Heart right ventricle (tissue), 16 donors: ENCODE measurements at regions of chr7 and their contacts with region 1.

Region 1: GRCh38 chr7:36979810-36980248 is 255.5 kb upstream of the AOAH start:
- DNase-seq: no peak
- ATAC-seq: peak in 2 of 8 donors; percentile 42 to 64
- H3K4me3 ChIP-seq: no peak overlapping the region
- H3K27ac ChIP-seq: no peak overlapping the region
- H3K4me1 ChIP-seq: peaks cover 0 to 12% (median 8%) of the 10 kb centered on the region in 9 donors
- H3K27me3 ChIP-seq: no peaks in the 10 kb centered on the region
- CTCF ChIP-seq: no peak

Region 2: GRCh38 chr7:36894190-36894589 is 85.6 kb before region 1 on chr7:
- intact Hi-C with region 1: no loop called
- DNase-seq: no peak
- ATAC-seq: no peak
- H3K4me3 ChIP-seq: no peak overlapping the region
- H3K27ac ChIP-seq: no peak overlapping the region
- H3K4me1 ChIP-seq: peaks cover 0 to 13% (median 0%) of the 10 kb centered on the region in 9 donors
- H3K27me3 ChIP-seq: no peaks in the 10 kb centered on the region
- CTCF ChIP-seq: no peak

Region 3: GRCh38 chr7:37176079-37176478 is 196.2 kb after region 1 on chr7:
- intact Hi-C with region 1: loop called in 8 of 10 experiments (anchors 5 kb)
- DNase-seq: no peak
- ATAC-seq: no peak
- H3K4me3 ChIP-seq: no peak overlapping the region
- H3K27ac ChIP-seq: no peak overlapping the region
- H3K4me1 ChIP-seq: no peaks in the 10 kb centered on the region
- H3K27me3 ChIP-seq: no peaks in the 10 kb centered on the region
- CTCF ChIP-seq: no peak

Region 4: DNA sequence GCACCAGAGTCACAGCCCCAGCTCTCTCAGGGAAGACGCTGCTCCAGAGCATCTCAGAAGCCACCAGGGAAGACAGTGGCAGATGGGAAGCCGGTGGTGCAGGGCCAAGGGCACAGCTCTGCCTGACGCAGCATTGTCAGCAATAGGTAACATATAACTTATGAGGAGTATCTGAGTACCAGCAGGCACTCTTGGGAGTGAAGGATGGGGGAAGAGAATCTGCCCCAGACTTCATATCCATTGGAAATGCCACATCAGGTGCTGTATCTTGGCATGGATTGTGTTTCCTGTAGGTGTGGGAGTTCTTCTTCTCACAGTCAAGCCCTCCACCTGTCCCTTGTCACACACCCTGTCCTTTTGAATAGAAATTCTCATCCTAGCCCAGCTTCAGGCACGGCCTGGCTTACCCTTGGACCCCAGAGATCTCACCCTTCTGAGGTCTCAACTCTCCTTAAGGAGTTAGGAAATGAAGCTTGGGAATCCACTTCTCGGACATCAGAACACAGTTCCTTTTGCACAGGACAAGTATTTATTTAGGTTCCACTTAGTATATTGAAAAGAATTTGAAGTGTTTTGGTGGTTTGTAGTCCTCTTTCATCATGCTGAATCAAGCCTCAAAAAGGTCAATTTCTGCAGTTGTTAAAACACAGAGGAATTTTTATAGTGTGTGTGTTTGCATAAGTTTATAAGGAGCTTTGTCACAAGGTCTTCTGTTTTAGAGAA is 950.6 kb after region 1 on chr7:
- intact Hi-C with region 1: no loop called
- DNase-seq: no peak
- ATAC-seq: no peak
- H3K4me3 ChIP-seq: no peak overlapping the region
- H3K27ac ChIP-seq: no peak overlapping the region
- H3K4me1 ChIP-seq: peaks cover 0 to 12% (median 4%) of the 10 kb centered on the region in 9 donors
- H3K27me3 ChIP-seq: no peaks in the 10 kb centered on the region
- CTCF ChIP-seq: no peak